ENCODE measurements at regions of chr3 and their contacts with region 1.

Region 1: GRCh38 chr3:100081986-100082692 is 32.2 kb downstream of the FILIP1L start:
- DNase-seq: no peak
- H3K4me3 ChIP-seq: no peak overlapping the region
- H3K4me3 Mint-ChIP-seq: no peak overlapping the region
- H3K27ac Mint-ChIP-seq: no peak overlapping the region
- H3K4me1 ChIP-seq: peaks cover 59% of the 10 kb centered on the region
- H3K4me1 Mint-ChIP-seq: peaks cover 40% of the 10 kb centered on the region
- H3K27me3 ChIP-seq: no peaks in the 10 kb centered on the region
- H3K27me3 Mint-ChIP-seq: no peaks in the 10 kb centered on the region
- CTCF ChIP-seq: no peak

Region 2: DNA sequence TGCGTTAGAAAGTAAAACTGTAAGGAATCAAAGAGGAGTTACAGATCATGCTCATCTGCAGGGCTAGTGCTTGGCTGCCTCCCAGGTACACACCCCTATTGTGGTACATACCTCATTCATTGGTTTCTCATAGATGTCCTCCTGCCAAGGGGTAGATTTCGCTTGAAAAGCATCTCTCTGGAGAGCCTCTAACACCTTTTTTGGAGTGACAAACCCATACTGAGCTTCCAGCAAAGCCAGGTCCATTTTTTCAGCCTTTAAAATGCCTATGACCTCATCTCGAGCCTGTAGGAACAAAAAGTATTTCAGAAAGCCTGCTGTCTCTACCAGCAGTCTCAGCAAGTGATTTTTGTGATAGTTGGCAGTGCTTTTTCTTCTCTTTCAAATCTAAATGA is 152.4 kb before region 1 on chr3:
- CTCF ChIA-PET with region 1: no interaction called
- POLR2A ChIA-PET with region 1: no interaction called
- intact Hi-C with region 1: loop called (anchors 1 kb)
- DNase-seq: no peak
- H3K4me3 ChIP-seq: no peak overlapping the region
- H3K4me3 Mint-ChIP-seq: no peak overlapping the region
- H3K27ac Mint-ChIP-seq: no peak overlapping the region
- H3K4me1 ChIP-seq: peaks cover 42% of the 10 kb centered on the region
- H3K4me1 Mint-ChIP-seq: peaks cover 20% of the 10 kb centered on the region
- H3K27me3 ChIP-seq: no peaks in the 10 kb centered on the region
- H3K27me3 Mint-ChIP-seq: no peaks in the 10 kb centered on the region
- CTCF ChIP-seq: no peak

Region 3: GRCh38 chr3:100097919-100098783 is 16.0 kb after region 1 on chr3:
- CTCF ChIA-PET with region 1: no interaction called
- POLR2A ChIA-PET with region 1: interaction called, 3 read pairs
- intact Hi-C with region 1: loop called (anchors 1 kb)
- DNase-seq: peak; percentile 74 to 82
- H3K4me3 ChIP-seq: no peak overlapping the region
- H3K4me3 Mint-ChIP-seq: peak overlapping the region; percentile 36
- H3K27ac Mint-ChIP-seq: peak overlapping the region; percentile 25
- H3K4me1 ChIP-seq: peaks cover 44% of the 10 kb centered on the region
- H3K4me1 Mint-ChIP-seq: peaks cover 34% of the 10 kb centered on the region
- H3K27me3 ChIP-seq: no peaks in the 10 kb centered on the region
- H3K27me3 Mint-ChIP-seq: no peaks in the 10 kb centered on the region
- CTCF ChIP-seq: no peak

Measured in Caco-2 (cell line).